ENCODE measurements at regions of chr12 and their contacts with region 1.

Region 1: GRCh38 chr12:132608231-132609171 is 1.9 kb downstream of the LRCOL1 start:
- DNase-seq: no peak
- H3K4me3 ChIP-seq: no peak overlapping the region
- CTCF ChIP-seq: no peak
- POLR2A ChIP-seq: no peak

Region 2: DNA sequence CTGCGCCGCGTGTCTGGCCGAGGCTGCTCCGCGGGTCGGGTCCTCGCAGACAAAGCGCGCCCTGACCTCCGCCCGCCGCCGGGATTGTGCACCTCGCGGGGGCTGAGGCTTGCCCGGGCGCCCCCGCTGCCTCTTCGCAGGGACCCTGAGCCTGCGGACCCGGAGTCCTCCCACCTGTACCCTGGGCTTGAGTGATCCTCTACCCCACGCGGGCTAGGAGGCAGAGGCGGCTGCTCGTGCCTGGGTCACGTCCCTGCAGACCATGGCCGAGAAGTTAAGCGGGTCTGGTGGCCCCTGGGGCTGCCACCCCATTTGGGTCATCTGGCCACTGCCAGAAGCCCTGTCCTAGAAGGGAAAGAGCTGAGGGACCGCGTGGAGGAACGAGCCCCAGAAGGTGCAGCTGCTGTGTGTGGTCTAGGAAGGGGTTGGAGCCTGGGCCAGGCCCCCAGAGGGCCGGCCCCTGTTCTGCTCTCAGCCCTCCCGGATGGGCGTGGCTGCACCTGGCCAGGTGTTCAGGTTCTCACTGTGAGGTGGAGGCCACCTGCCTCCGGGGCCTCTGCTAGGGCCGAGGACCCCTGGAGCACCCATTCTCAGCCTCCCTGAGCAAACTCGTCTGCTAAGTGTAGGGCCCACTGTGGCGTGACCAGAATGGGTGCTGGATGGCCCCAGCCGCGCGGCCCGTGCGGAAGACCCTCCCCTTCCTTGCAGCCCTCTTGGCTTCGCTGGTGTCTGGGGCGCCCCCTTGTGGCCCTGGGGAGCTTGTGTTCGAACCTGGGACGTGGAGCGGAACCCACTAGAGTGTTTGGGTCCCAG is 47.7 kb before region 1 on chr12:
- intact Hi-C with region 1: loop called (anchors 2 kb)
- DNase-seq: no peak
- H3K4me3 ChIP-seq: peak overlapping the region; percentile 59
- CTCF ChIP-seq: no peak
- POLR2A ChIP-seq: no peak

Region 3: GRCh38 chr12:132717531-132718387 is 109.3 kb after region 1 on chr12:
- intact Hi-C with region 1: no loop called
- DNase-seq: no peak
- H3K4me3 ChIP-seq: no peak overlapping the region
- CTCF ChIP-seq: no peak
- POLR2A ChIP-seq: no peak